Prostate gland (tissue), 2 donors: ENCODE measurements at regions of chr2 and their contacts with region 1.

Region 1: GRCh38 chr2:26968001-26968400 is 2.4 kb upstream of the MAPRE3 start:
- DNase-seq: no peak
- H3K4me3 ChIP-seq: no peak overlapping the region
- H3K27ac ChIP-seq: no peak overlapping the region
- H3K4me1 ChIP-seq: no peaks in the 10 kb centered on the region
- H3K27me3 ChIP-seq: no peaks in the 10 kb centered on the region
- CTCF ChIP-seq: no peak
- POLR2A ChIP-seq: no peak

Region 2: DNA sequence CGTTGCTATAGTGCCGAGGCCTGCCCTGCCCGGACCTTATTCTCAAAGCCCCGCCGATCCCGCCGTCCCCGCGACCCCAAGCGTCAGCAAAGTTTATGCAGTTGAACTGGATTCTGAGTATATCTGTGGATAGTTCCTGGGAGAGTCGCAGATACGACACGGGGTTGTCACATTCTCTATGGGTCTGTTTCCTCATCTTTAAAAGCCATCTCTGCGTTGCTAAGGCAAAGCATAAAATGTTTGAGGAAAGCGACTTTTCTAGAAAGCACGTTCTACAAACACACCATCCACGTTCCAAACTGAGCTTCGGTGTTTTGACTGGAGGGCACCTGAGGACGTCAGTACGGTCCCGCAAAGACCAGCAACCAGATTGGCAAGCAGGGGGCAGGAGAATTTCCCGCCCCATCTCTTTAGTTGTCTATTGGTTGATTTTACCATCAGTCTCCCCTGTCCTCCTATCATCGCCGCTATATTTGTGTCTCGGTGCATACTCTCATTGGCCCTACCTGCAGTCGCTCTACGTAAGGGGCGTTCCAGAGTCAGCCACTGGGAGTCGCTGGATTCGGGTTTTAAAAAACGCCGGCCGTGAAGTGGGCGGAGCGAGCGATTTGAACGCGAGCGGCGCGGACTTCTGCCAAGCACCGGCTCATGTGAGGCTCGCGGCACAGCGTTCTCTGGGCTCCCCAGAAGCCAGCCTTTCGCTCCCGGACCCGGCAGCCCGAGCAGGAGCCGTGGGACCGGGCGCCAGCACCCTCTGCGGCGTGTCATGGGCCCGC is 182.4 kb before region 1 on chr2 and contains the start of gene CENPA:
- intact Hi-C with region 1: no loop called
- DNase-seq: peak; percentile 97
- H3K4me3 ChIP-seq: peak within 1 kb of the TSS; percentile 54 to 55
- H3K27ac ChIP-seq: peak within 1 kb of the TSS in 1 of 2 donors; percentile 48
- H3K4me1 ChIP-seq: peaks cover 4% of the 10 kb centered on the region
- H3K27me3 ChIP-seq: no peaks in the 10 kb centered on the region
- CTCF ChIP-seq: peak; percentile 29 to 81 (median 58)
- POLR2A ChIP-seq: peak; percentile 9
- total RNA-seq, gene CENPA: 0.23 to 0.68 TPM

Region 3: DNA sequence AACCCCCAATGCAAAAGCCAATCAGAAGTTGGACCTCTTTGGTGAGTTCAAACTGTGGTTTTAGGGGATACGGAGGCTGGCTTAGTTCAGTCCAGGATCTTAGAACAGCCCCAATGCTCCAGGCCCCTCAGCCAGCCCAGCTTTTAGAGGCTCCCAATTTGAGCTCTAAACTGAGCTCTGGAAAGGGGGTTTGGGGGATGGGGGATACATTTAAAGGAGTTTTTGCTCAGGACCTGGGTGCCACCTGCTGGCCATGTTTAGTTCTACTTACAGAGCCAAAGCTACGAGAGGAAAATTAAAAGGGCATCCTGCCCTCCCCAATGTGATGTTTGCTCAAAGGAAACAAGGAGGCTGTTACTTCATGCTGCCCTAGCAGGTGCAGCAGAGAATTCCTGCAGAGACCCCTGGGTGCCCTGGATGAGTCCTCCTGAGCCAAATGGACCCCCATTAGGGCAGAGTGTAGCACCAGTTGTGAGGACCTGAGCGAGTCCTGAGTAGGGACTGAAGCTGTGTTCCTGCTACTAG is 48.9 kb after region 1 on chr2:
- intact Hi-C with region 1: no loop called
- DNase-seq: peak; percentile 25
- H3K4me3 ChIP-seq: no peak overlapping the region
- H3K27ac ChIP-seq: no peak overlapping the region
- H3K4me1 ChIP-seq: no peaks in the 10 kb centered on the region
- H3K27me3 ChIP-seq: no peaks in the 10 kb centered on the region
- CTCF ChIP-seq: peak; percentile 57 to 77 (median 72)
- POLR2A ChIP-seq: no peak

Region 4: DNA sequence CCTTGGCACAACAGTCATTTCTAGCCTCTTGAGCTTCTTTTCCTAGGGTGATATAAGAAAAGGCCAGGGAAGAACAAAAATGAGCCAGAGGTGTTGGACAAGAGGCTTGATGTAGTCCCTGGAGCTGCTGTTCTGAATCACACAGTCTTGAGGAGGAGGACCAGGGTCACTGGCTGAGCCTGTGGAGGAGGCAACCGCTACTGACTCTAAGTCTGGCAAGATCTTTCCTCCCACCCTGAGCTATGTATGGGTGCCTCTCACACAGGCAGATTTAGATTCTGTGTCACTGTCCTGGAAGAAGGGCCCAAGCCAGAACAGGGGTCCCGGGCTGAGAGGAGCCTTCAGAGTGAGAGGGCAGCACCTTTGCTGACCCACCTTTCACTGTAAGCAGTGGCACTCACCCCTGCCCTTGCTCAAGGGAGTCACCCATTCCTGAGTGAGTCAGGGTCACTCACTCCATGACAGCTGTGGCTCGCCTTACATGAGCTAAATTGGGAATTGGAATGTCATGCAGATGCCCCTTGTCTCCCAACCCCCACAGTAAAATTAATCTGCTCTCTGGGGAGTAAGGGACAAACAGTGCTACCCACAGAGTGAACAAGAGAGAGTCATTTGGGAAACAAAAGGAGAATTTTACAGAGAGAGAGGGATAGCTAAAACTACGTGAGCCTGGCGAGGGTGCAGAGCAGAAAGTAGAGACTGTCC is 314.0 kb after region 1 on chr2 and contains the start of gene TRIM54:
- intact Hi-C with region 1: loop called (anchors 10 kb)
- DNase-seq: no peak
- H3K4me3 ChIP-seq: no peak within 1 kb of the TSS
- H3K27ac ChIP-seq: no peak within 1 kb of the TSS
- H3K4me1 ChIP-seq: no peaks in the 10 kb centered on the region
- H3K27me3 ChIP-seq: no peaks in the 10 kb centered on the region
- CTCF ChIP-seq: no peak
- POLR2A ChIP-seq: no peak
- total RNA-seq, gene TRIM54: 2.8 to 17.9 TPM